ENCODE measurements at regions of chr12 and their contacts with region 1.

Region 1: DNA sequence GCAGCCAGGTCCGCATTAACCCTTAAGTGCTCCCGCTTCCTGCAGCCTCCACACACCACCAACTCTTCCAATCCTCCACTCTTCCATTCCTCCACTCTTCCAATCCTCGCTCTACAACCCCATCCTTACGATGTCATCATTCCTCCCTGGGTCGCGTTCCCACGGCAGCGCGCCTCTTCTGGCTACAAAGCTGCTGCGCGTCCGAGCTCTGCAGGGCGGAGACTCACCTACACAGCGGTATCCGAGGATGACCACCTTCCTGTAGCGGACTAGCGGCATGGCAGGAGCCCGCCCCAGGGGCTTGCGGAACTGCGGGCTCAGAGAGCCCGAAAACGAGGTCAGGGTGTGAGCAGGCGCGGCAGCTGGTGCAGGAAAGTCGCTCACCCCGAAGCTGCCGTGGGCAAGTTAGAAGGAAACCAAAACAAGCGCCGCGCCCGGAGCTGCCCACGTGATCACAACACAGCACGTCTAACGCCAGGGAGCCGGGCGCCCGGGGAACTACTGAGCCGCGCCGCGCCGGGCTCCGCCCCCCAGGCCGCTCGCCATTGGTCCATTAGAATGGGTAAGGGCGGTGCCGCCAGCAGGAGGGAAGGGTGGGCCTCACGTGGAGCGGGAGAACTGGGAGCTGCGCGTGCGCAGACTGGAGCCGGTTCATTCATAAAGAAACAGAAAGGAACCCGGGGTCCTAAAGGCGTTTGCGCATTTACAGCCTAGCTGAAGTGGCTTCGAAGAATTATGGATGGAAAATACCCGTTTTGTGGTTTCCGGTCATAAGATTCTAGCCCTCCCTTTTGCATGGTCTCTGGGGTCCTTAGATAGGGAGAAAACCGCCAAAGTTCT is at the start of gene RHEBL1:
- DNase-seq: peak; percentile 96

Region 2: DNA sequence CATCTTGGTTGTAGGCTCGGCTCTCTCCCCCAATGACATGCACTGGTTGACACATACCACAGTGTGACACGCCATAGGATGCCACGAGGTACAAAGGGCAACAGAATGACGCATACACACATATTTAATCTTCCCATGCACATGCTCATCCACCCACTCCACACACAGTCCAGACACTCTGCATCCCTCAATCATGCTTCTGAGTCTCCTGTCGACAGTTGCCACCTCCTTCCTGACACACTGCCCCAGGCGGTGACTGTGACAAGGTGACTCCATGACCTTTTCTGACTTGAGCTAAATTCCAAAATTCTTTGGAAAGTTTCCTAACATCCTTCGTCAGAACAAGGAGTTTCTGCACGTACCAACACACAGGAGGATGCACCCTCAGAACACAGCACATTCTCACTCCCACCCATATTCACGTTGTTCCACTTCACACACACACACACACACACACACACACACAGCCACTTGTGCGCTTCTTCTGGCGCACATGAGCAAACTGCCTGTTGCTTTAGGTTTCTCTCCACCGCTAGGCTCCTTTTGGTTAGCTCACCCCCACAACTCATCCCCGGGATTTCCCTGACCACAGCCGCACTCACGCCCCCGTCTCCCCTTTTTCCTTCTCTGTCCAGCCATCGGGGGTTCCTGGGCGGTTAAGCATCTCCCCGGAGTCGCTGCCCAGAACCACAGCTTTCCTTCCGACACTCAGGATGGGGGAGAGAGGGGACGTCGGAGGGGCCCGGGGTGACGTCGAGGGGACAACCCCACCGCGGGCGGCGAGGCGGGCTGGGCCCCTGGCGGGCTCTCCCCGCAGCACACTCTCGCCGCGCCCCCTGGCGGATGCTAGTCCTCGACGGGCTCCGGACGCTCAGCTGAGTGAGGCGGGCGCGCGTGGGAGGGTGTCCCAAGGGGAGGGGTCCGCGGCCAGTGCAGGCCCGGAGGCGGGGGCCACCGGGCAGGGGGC is 92.1 kb before region 1 on chr12:
- CTCF ChIA-PET with region 1: no interaction called
- POLR2A ChIA-PET with region 1: no interaction called
- DNase-seq: peak; percentile 57

Region 3: GRCh38 chr12:49098035-49098451 is 28.3 kb after region 1 on chr12:
- CTCF ChIA-PET with region 1: interaction called, 28 read pairs
- POLR2A ChIA-PET with region 1: no interaction called
- DNase-seq: peak; percentile 78

Region 4: GRCh38 chr12:49110464-49111155 is 40.9 kb after region 1 on chr12 and contains the start of gene LMBR1L:
- CTCF ChIA-PET with region 1: interaction called, 15 read pairs
- POLR2A ChIA-PET with region 1: interaction called, 9 read pairs
- DNase-seq: peak; percentile 98

Region 5: GRCh38 chr12:49121047-49121696 is 51.4 kb after region 1 on chr12:
- CTCF ChIA-PET with region 1: interaction called, 11 read pairs
- POLR2A ChIA-PET with region 1: interaction called, 3 read pairs
- DNase-seq: peak; percentile 58

Measured in HEK293T (cell line).